Ascending aorta (tissue), 2 donors: ENCODE measurements at regions of chr11 and their contacts with region 1.

Region 1: DNA sequence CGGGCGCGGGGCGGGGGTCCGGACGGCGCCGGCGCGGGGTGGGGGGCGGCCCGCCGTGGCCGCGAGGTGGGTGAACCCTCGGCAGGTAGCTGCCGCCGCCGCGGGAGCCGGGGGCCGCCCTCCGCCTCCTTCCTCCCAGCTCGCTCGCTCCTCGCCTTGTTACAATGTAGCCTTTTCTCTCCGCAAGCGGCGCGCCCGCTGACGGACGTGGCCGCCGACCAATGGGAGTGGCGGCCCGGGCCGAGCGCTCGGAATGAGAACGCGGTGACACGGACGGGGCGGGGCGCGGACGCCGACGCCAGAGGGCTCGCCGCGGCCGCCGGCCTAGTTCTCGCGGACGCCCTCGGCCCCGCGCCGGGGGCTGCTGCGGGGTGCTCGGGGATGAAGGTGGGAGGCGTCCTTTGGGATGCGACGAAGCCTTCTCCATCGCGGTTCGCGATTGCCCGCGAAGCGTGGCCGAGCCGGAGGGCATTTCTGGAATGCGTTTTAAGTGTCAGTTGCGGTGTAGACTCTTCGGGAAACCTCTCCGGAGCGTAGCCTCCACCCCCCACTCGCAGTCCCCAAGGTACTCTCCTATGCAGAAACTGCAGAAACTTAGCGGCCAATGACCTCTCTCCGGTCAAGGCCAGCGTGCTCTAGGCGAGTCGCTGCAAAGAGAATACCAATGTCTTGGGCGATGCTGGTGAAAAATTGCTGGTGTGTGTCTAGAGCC is 734 bp downstream of the PRDM11 start:
- DNase-seq: peak; percentile 89 to 98
- H3K4me3 ChIP-seq: peak overlapping the region; percentile 79 to 91
- H3K27ac ChIP-seq: peak overlapping the region; percentile 74 to 95
- H3K4me1 ChIP-seq: peaks cover 8 to 17% of the 10 kb centered on the region in 2 donors
- H3K27me3 ChIP-seq: no peaks in the 10 kb centered on the region
- CTCF ChIP-seq: no peak

Region 2: DNA sequence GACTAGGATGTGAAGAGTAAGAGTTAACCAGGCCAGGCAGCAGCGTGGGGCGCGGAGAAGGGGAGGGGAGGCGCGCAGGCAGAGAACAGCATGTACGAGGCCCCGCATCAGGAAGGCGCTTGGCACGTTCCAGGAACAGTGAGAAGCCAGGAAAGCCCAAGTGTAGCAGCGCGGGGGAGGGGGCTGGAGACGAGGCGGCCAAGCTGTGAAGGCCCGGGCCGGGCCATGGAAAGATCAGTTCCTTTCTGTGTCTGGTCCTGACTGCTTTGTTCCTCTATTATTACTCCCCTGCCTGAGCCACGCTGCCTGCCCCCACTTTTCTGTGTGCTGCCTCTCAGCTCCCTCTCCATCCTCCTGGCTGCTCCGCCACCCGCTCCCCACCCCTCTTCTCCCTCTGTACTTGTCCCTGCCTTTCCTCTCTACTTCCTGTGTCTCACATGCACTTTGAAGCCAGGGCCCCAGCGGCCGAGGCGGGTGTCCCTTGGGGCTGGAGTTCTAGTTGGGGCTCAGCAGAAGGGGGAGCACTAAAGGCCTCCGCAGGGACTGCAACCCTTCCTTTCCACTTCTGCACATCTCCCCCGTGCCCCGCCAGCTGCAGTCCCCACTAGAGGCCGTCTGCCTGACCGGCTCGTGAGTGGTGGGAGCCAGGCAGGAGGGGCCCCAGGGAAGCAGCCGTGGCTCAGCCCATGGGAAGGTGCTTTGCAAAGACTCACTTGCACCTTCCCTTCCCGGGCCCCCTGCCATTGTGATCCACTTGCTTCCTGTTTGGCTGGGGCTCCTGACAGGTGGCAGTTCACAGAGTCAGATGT is 62.9 kb after region 1 on chr11:
- intact Hi-C with region 1: loop called (anchors 2 kb)
- DNase-seq: peak; percentile 67 to 93
- H3K4me3 ChIP-seq: peak overlapping the region; percentile 16 to 30
- H3K27ac ChIP-seq: peak overlapping the region; percentile 83 to 84
- H3K4me1 ChIP-seq: peaks cover 18 to 24% of the 10 kb centered on the region in 2 donors
- H3K27me3 ChIP-seq: no peaks in the 10 kb centered on the region
- CTCF ChIP-seq: no peak

Region 3: DNA sequence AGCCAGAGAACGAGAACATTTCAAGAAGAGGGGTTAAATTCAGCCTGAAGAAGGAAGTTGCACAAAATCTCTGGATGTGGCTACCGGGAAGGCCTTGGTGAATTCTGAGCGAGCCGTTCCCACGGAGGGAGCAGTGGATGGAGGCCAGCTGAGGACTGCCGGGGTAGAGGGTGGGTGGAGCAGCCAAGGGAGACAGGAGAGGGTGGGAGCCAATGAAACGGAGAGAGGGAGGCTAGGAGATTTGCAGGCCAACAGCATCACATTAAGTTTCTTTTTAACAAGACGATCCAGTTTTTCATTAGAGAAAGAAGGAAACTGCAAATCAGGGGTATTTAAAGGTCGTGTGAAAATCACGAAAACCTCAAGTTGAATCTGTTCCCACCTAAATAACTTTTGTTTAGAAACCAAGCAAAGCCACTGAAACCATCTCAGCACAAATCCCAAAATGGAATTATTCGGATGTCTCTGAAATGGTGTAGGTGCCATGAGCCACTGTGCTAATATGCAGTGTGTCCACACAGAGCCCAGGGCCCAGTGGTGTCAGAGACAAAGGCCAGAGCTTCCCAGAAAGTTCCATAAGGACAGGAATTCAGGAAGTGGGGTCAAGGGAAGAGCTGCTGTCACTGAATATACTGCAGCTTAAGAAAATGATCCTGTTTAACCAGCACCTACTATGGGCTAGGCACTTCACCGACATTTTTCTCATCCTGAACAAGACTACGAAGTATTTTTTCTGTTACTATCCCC is 598.1 kb after region 1 on chr11:
- intact Hi-C with region 1: loop called (anchors 10 kb)
- DNase-seq: peak in 1 of 2 donors; percentile 89
- H3K4me3 ChIP-seq: peak overlapping the region in 1 of 2 donors; percentile 35
- H3K27ac ChIP-seq: peak overlapping the region; percentile 82 to 86
- H3K4me1 ChIP-seq: peaks cover 0 to 18% of the 10 kb centered on the region in 2 donors
- H3K27me3 ChIP-seq: no peaks in the 10 kb centered on the region
- CTCF ChIP-seq: no peak